ENCODE measurements at regions of chr17 and their contacts with region 1.

Region 1: GRCh38 chr17:64281962-64282727 is 19.1 kb upstream of the TEX2 start:
- DNase-seq: no peak
- H3K4me3 ChIP-seq: no peak overlapping the region
- H3K27me3 ChIP-seq: no peaks in the 10 kb centered on the region
- CTCF ChIP-seq: peak; percentile 80

Region 2: DNA sequence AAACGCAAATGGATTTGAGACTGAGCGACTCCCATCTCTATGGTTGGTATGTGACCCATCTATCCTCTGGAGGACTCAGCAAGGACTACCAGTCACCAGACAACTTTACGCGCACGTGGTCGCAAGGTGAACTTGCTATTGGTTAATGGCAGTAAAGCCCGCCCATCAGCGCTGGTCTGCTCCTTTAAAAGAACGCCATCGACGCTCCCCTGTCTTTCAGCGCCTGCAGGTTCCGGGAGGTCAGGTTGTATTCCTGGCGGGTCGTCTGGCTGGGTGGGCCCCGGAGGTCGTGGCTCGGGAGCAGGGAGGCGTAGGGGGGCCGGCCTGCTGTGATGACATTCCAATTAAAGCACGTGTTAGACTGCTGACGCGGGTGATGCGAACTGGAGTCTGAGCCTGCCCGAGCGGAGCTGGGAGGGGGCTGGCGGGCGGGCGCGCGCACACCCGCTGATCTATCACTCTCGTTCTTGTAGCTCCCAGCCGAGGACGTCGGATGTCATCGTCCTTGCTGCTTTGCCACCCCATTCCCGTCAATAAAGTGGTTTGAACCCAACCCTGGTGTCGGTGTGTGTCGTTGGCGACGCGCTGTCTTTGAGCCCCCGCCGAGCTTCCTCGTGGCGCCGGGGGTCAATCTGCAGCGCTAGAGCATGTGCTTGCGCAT is 136.3 kb before region 1 on chr17:
- CTCF ChIA-PET with region 1: interaction called, 35 read pairs
- POLR2A ChIA-PET with region 1: interaction called, 8 read pairs
- DNase-seq: peak; percentile 96
- H3K4me3 ChIP-seq: peak overlapping the region; percentile 88
- H3K27me3 ChIP-seq: no peaks in the 10 kb centered on the region
- CTCF ChIP-seq: no peak

Region 3: DNA sequence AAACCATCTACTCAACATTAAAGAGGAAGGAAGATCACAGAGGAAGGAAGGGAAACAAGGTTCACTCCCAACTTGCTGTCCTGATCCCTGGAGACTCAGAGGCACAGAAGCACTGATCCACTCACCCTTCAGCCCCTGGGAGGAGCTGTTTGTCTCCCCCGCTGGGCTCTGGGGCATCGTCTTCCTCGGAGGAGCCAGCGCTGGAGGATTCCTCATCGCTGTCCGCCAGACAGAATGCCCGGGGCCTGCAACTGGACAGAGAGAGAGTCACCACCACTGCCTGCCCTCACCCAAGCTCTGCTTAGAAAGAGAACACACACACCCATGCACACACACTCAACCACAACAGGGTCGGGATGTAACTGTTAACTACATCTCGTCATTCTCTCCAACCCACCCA is 127.4 kb before region 1 on chr17:
- CTCF ChIA-PET with region 1: interaction called, 35 read pairs
- POLR2A ChIA-PET with region 1: no interaction called
- DNase-seq: no peak
- H3K4me3 ChIP-seq: no peak overlapping the region
- H3K27me3 ChIP-seq: no peaks in the 10 kb centered on the region
- CTCF ChIP-seq: peak; percentile 37

Region 4: GRCh38 chr17:64180089-64181073 is 101.8 kb before region 1 on chr17:
- CTCF ChIA-PET with region 1: interaction called, 10 read pairs
- POLR2A ChIA-PET with region 1: no interaction called
- DNase-seq: no peak
- H3K4me3 ChIP-seq: no peak overlapping the region
- H3K27me3 ChIP-seq: no peaks in the 10 kb centered on the region
- CTCF ChIP-seq: peak; percentile 43

Region 5: GRCh38 chr17:64230795-64231408 is 51.2 kb before region 1 on chr17:
- CTCF ChIA-PET with region 1: no interaction called
- POLR2A ChIA-PET with region 1: no interaction called
- DNase-seq: peak; percentile 96
- H3K4me3 ChIP-seq: no peak overlapping the region
- H3K27me3 ChIP-seq: no peaks in the 10 kb centered on the region
- CTCF ChIP-seq: no peak